ENCODE measurements at regions of chr7 and their contacts with region 1.

Region 1: GRCh38 chr7:84025332-84025927 is 169.2 kb downstream of the SEMA3A start:
- DNase-seq: peak; percentile 89
- H3K4me3 ChIP-seq: no peak overlapping the region
- H3K27ac ChIP-seq: peak overlapping the region; percentile 39
- H3K4me1 ChIP-seq: peaks cover 23% of the 10 kb centered on the region
- H3K27me3 ChIP-seq: no peaks in the 10 kb centered on the region
- CTCF ChIP-seq: no peak

Region 2: DNA sequence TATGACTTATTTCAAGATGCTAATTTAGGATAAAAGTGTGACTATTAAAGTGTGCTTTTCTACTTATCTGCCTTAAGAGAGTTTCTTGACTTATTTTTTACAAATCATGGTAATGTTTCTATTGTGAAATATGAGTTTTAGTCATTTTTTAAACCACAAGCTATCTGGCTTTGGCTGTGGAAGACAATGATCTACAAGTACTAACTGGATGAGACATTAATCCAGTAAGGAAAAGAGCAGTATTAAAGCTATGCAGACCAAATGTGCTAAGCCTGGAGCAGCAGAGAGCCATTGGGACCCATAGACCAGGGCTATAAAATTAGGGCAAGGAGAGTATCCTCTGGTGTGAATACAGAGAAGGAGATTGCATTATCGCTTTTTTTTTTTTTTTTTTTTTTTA is 76.8 kb after region 1 on chr7:
- CTCF ChIA-PET with region 1: interaction called, 10 read pairs
- dilution Hi-C with region 1: no loop called
- in situ Hi-C with region 1: no loop called
- intact Hi-C with region 1: no loop called
- DNase-seq: peak; percentile 67
- H3K4me3 ChIP-seq: no peak overlapping the region
- H3K27ac ChIP-seq: no peak overlapping the region
- H3K4me1 ChIP-seq: peaks cover 3% of the 10 kb centered on the region
- H3K27me3 ChIP-seq: no peaks in the 10 kb centered on the region
- CTCF ChIP-seq: no peak

Measured in mammary epithelial cell (primary cell).